CD4-positive, alpha-beta memory T cell (primary cell): ENCODE measurements at regions of chr22 and their contacts with region 1.

Region 1: GRCh38 chr22:25057013-25057881 is 104.7 kb downstream of the KIAA1671 start:
- DNase-seq: peak; percentile 45 to 68 (median 62)
- H3K4me3 ChIP-seq: no peak overlapping the region
- H3K4me3 Mint-ChIP-seq: no peak overlapping the region
- H3K27ac ChIP-seq: no peak overlapping the region
- H3K27ac Mint-ChIP-seq: peak overlapping the region in 1 of 7 donors; percentile 24
- H3K4me1 ChIP-seq: peaks cover 21% of the 10 kb centered on the region
- H3K4me1 Mint-ChIP-seq: peaks cover 19 to 27% (median 24%) of the 10 kb centered on the region in 4 donors
- H3K27me3 ChIP-seq: no peaks in the 10 kb centered on the region
- H3K27me3 Mint-ChIP-seq: peaks cover 2 to 3% of the 10 kb centered on the region in 2 donors

Region 2: GRCh38 chr22:24060375-24060788 is 996.9 kb before region 1 on chr22:
- CTCF ChIA-PET with region 1: no interaction called
- POLR2A ChIA-PET with region 1: no interaction called
- intact Hi-C with region 1: no loop called
- DNase-seq: no peak
- H3K4me3 ChIP-seq: no peak overlapping the region
- H3K4me3 Mint-ChIP-seq: no peak overlapping the region
- H3K27ac ChIP-seq: no peak overlapping the region
- H3K27ac Mint-ChIP-seq: peak overlapping the region in 3 of 7 donors; percentile 8 to 49 (median 14)
- H3K4me1 ChIP-seq: no peaks in the 10 kb centered on the region
- H3K4me1 Mint-ChIP-seq: peaks cover 0 to 8% (median 4%) of the 10 kb centered on the region in 4 donors
- H3K27me3 ChIP-seq: no peaks in the 10 kb centered on the region
- H3K27me3 Mint-ChIP-seq: no peaks in the 10 kb centered on the region

Region 3: GRCh38 chr22:24938741-24939341 is 118.4 kb before region 1 on chr22:
- CTCF ChIA-PET with region 1: interaction called, 30 read pairs
- POLR2A ChIA-PET with region 1: no interaction called
- intact Hi-C with region 1: no loop called
- DNase-seq: peak in 4 of 5 donors; percentile 38 to 47 (median 42)
- H3K4me3 ChIP-seq: no peak overlapping the region
- H3K4me3 Mint-ChIP-seq: no peak overlapping the region
- H3K27ac ChIP-seq: no peak overlapping the region
- H3K27ac Mint-ChIP-seq: no peak overlapping the region
- H3K4me1 ChIP-seq: no peaks in the 10 kb centered on the region
- H3K4me1 Mint-ChIP-seq: peaks cover 0 to 2% (median 0%) of the 10 kb centered on the region in 4 donors
- H3K27me3 ChIP-seq: no peaks in the 10 kb centered on the region
- H3K27me3 Mint-ChIP-seq: peaks cover 0 to 5% of the 10 kb centered on the region in 2 donors

Region 4: DNA sequence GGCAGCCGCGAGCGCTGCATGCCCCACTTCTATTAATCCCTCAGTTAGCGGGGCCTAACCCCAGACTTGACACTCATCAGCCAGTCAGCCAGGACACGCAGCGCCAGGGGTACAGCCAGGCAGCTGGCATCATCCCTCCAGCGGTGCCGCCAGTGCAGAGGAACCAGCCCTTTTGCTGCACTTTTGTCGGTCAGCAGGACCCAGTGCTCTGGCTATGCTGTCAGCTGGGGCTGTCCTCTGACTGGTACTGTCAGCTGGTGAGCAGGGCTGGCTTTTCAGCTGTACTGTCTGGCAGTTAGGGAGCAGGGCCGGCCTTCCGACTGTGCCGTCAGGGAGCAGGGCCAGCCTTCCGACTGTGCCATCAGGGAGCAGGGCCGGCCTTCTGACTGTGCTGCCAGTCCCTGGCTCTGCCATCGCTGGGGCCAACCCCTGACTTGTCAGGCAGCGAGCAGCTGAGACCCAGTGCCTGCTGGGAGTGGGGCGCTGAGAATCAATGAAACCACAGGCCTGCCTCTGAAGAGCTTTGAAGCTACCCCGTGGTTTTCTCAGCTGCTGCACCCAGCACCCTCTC is 10.7 kb after region 1 on chr22:
- CTCF ChIA-PET with region 1: interaction called, 26 read pairs
- POLR2A ChIA-PET with region 1: interaction called, 19 read pairs
- intact Hi-C with region 1: loop called (anchors 1 kb)
- DNase-seq: peak; percentile 91 to 95 (median 93)
- H3K4me3 ChIP-seq: no peak overlapping the region
- H3K4me3 Mint-ChIP-seq: peak overlapping the region; percentile 84 to 95 (median 90)
- H3K27ac ChIP-seq: peak overlapping the region; percentile 77
- H3K27ac Mint-ChIP-seq: peak overlapping the region; percentile 95 to 99 (median 97)
- H3K4me1 ChIP-seq: peaks cover 83% of the 10 kb centered on the region
- H3K4me1 Mint-ChIP-seq: peaks cover 57 to 91% (median 77%) of the 10 kb centered on the region in 4 donors
- H3K27me3 ChIP-seq: no peaks in the 10 kb centered on the region
- H3K27me3 Mint-ChIP-seq: no peaks in the 10 kb centered on the region

Region 5: DNA sequence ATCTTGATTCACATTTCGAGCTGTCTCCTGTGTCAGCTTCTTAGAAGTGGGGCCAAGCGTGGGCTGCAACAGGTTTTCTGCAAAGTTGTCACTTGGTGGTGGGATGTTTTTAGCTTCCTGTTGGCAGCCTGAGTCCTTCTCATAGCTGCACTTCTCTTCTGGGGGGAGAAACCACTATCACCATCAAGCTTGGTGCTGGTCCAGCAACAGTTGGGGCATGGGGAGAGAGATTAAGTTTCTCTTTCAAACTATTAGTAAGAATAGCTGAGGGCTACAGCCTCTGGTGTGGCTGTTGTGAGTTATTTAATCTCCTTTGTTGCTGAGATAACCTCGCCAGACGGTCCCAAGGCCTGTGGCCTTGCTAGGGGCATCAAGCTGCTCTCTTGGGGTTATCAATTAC is 19.1 kb after region 1 on chr22:
- CTCF ChIA-PET with region 1: interaction called, 34 read pairs
- POLR2A ChIA-PET with region 1: interaction called, 40 read pairs
- intact Hi-C with region 1: loop called (anchors 1 kb)
- DNase-seq: no peak
- H3K4me3 ChIP-seq: no peak overlapping the region
- H3K4me3 Mint-ChIP-seq: peak overlapping the region; percentile 8 to 79 (median 70)
- H3K27ac ChIP-seq: no peak overlapping the region
- H3K27ac Mint-ChIP-seq: peak overlapping the region; percentile 47 to 87 (median 74)
- H3K4me1 ChIP-seq: peaks cover 48% of the 10 kb centered on the region
- H3K4me1 Mint-ChIP-seq: peaks cover 38 to 56% (median 44%) of the 10 kb centered on the region in 4 donors
- H3K27me3 ChIP-seq: no peaks in the 10 kb centered on the region
- H3K27me3 Mint-ChIP-seq: no peaks in the 10 kb centered on the region

Region 6: DNA sequence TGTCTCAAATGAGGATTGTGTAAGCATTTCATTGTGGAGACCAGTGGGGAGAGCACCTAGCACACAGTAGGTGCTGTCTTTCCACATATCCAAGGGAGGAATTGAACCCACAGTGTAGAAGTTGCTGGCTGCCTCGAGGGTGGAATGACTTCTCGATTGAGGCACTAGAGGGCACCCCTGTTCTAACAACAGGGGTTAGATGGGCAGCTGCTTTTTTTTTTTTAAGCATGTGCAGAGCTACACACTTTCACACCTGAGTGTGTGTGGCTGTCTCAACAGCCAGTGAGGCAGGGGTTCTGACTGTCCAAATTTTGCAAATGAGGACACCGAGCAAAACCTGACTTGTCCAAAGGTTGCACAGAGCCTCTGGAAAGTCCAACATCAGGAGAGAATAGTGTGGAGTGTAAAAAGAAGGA is 24.2 kb after region 1 on chr22:
- CTCF ChIA-PET with region 1: interaction called, 34 read pairs
- POLR2A ChIA-PET with region 1: interaction called, 40 read pairs
- intact Hi-C with region 1: loop called (anchors 1 kb)
- DNase-seq: peak; percentile 40 to 52 (median 44)
- H3K4me3 ChIP-seq: no peak overlapping the region
- H3K4me3 Mint-ChIP-seq: no peak overlapping the region
- H3K27ac ChIP-seq: no peak overlapping the region
- H3K27ac Mint-ChIP-seq: peak overlapping the region in 2 of 7 donors; percentile 24 to 30
- H3K4me1 ChIP-seq: peaks cover 26% of the 10 kb centered on the region
- H3K4me1 Mint-ChIP-seq: peaks cover 28 to 44% (median 31%) of the 10 kb centered on the region in 4 donors
- H3K27me3 ChIP-seq: no peaks in the 10 kb centered on the region
- H3K27me3 Mint-ChIP-seq: no peaks in the 10 kb centered on the region

Region 7: GRCh38 chr22:25110846-25111578 is 53.8 kb after region 1 on chr22:
- CTCF ChIA-PET with region 1: interaction called, 27 read pairs
- POLR2A ChIA-PET with region 1: interaction called, 10 read pairs
- intact Hi-C with region 1: loop called (anchors 1 kb)
- DNase-seq: peak; percentile 50 to 58 (median 53)
- H3K4me3 ChIP-seq: peak overlapping the region; percentile 33 to 66
- H3K4me3 Mint-ChIP-seq: peak overlapping the region; percentile 85 to 92 (median 88)
- H3K27ac ChIP-seq: no peak overlapping the region
- H3K27ac Mint-ChIP-seq: peak overlapping the region; percentile 16 to 89 (median 85)
- H3K4me1 ChIP-seq: peaks cover 7% of the 10 kb centered on the region
- H3K4me1 Mint-ChIP-seq: peaks cover 6 to 20% (median 13%) of the 10 kb centered on the region in 4 donors
- H3K27me3 ChIP-seq: no peaks in the 10 kb centered on the region
- H3K27me3 Mint-ChIP-seq: no peaks in the 10 kb centered on the region

Region 8: GRCh38 chr22:25172153-25172552 is 114.9 kb after region 1 on chr22:
- CTCF ChIA-PET with region 1: interaction called, 8 read pairs
- POLR2A ChIA-PET with region 1: interaction called, 3 read pairs
- intact Hi-C with region 1: loop called (anchors 1 kb)
- DNase-seq: peak in 4 of 5 donors; percentile 7 to 22 (median 13)
- H3K4me3 ChIP-seq: no peak overlapping the region
- H3K4me3 Mint-ChIP-seq: no peak overlapping the region
- H3K27ac ChIP-seq: no peak overlapping the region
- H3K27ac Mint-ChIP-seq: no peak overlapping the region
- H3K4me1 ChIP-seq: no peaks in the 10 kb centered on the region
- H3K4me1 Mint-ChIP-seq: no peaks in the 10 kb centered on the region
- H3K27me3 ChIP-seq: no peaks in the 10 kb centered on the region
- H3K27me3 Mint-ChIP-seq: no peaks in the 10 kb centered on the region